ENCODE measurements at regions of chr7 and their contacts with region 1.

Region 1: DNA sequence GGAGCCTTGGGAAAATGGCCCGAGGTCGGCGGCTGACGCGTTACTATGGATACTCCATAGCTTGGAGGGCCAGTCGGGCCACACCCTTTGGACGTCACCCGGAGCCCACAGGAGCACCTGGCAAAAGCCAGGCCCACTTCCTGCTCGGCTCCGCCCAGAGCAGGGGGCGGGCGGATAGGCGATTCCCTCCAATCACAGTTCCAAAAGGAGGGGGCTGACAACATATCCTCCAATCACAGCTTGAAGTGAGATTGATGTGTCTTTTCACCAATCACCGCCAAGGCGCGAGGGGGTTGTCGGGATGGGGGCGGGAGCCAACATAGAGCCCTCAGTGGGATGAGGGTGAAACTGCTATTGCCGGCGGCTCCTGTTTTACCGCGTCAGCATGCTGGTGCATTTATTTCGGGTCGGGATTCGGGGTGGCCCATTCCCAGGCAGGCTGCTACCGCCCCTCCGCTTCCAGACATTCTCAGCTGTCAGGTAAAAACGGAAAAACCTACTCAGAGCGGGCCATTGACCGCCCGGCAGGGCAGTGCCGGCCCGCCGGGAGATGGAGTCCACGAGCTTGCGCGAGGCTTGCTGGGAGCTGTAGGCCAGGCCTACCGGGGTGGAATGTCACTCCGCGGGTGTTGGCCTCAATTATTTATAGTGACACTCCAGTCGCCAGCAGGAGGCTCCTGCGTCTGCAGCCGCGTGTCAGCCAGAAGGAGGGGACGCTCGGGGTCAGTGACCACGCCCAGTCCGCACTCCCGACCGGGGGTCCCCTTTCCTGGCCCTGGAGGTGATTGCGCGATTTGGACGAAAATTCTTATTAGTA is at the start of gene ABCB8:
- DNase-seq: peak; percentile 99 to 100 (median 99)
- H3K4me3 ChIP-seq: peak within 1 kb of the TSS; percentile 84 to 88
- H3K4me3 Mint-ChIP-seq: peak within 1 kb of the TSS; percentile 92 to 97 (median 95)
- H3K27ac ChIP-seq: peak within 1 kb of the TSS; percentile 88
- H3K27ac Mint-ChIP-seq: peak within 1 kb of the TSS; percentile 99 to 100 (median 99)
- H3K4me1 ChIP-seq: peaks cover 21% of the 10 kb centered on the region
- H3K4me1 Mint-ChIP-seq: peaks cover 13 to 28% (median 21%) of the 10 kb centered on the region in 4 donors
- H3K27me3 ChIP-seq: no peaks in the 10 kb centered on the region
- H3K27me3 Mint-ChIP-seq: no peaks in the 10 kb centered on the region
- total RNA-seq, gene ABCB8: 71.2 to 75.8 TPM

Region 2: DNA sequence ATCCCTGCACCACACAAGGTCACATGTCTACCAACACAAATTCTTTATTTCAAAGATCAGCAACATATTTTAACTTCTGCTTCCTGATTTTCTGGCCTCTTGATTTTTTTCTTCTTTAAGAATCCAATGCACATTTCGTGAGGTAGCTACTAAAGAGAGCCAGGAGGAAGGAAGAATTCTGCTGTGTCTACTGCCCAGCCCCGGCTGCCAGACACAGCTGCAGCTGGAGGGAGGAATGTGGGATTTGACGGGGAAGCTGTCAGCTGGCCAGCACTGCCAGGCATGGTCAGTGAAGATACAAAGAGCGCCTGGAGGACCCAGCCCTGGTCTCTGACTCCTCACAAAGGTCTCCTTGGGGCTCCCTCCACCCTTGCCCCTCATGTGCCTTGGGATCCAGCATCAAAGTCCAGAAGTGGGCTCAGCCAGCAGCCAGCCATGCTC is 182.9 kb before region 1 on chr7:
- CTCF ChIA-PET with region 1: no interaction called
- POLR2A ChIA-PET with region 1: no interaction called
- intact Hi-C with region 1: no loop called
- DNase-seq: no peak
- H3K4me3 ChIP-seq: no peak overlapping the region
- H3K4me3 Mint-ChIP-seq: no peak overlapping the region
- H3K27ac ChIP-seq: no peak overlapping the region
- H3K27ac Mint-ChIP-seq: no peak overlapping the region
- H3K4me1 ChIP-seq: no peaks in the 10 kb centered on the region
- H3K4me1 Mint-ChIP-seq: no peaks in the 10 kb centered on the region
- H3K27me3 ChIP-seq: no peaks in the 10 kb centered on the region
- H3K27me3 Mint-ChIP-seq: peaks cover 2 to 7% of the 10 kb centered on the region in 2 donors

Region 3: GRCh38 chr7:150962553-150963399 is 65.6 kb before region 1 on chr7:
- CTCF ChIA-PET with region 1: interaction called, 11 read pairs
- POLR2A ChIA-PET with region 1: no interaction called
- intact Hi-C with region 1: no loop called
- DNase-seq: peak in 4 of 5 donors; percentile 58 to 63 (median 62)
- H3K4me3 ChIP-seq: no peak overlapping the region
- H3K4me3 Mint-ChIP-seq: no peak overlapping the region
- H3K27ac ChIP-seq: no peak overlapping the region
- H3K27ac Mint-ChIP-seq: no peak overlapping the region
- H3K4me1 ChIP-seq: peaks cover 21% of the 10 kb centered on the region
- H3K4me1 Mint-ChIP-seq: peaks cover 6 to 15% (median 9%) of the 10 kb centered on the region in 4 donors
- H3K27me3 ChIP-seq: no peaks in the 10 kb centered on the region
- H3K27me3 Mint-ChIP-seq: peaks cover 12 to 13% of the 10 kb centered on the region in 2 donors

Region 4: GRCh38 chr7:151008511-151009323 is 19.6 kb before region 1 on chr7:
- CTCF ChIA-PET with region 1: interaction called, 11 read pairs
- POLR2A ChIA-PET with region 1: interaction called, 182 read pairs
- intact Hi-C with region 1: loop called (anchors 1 kb)
- DNase-seq: peak; percentile 68 to 82 (median 74)
- H3K4me3 ChIP-seq: peak overlapping the region; percentile 17 to 53
- H3K4me3 Mint-ChIP-seq: peak overlapping the region; percentile 80 to 90 (median 88)
- H3K27ac ChIP-seq: peak overlapping the region; percentile 69
- H3K27ac Mint-ChIP-seq: peak overlapping the region; percentile 87 to 98 (median 96)
- H3K4me1 ChIP-seq: peaks cover 74% of the 10 kb centered on the region
- H3K4me1 Mint-ChIP-seq: peaks cover 39 to 81% (median 59%) of the 10 kb centered on the region in 4 donors
- H3K27me3 ChIP-seq: no peaks in the 10 kb centered on the region
- H3K27me3 Mint-ChIP-seq: no peaks in the 10 kb centered on the region

Region 5: DNA sequence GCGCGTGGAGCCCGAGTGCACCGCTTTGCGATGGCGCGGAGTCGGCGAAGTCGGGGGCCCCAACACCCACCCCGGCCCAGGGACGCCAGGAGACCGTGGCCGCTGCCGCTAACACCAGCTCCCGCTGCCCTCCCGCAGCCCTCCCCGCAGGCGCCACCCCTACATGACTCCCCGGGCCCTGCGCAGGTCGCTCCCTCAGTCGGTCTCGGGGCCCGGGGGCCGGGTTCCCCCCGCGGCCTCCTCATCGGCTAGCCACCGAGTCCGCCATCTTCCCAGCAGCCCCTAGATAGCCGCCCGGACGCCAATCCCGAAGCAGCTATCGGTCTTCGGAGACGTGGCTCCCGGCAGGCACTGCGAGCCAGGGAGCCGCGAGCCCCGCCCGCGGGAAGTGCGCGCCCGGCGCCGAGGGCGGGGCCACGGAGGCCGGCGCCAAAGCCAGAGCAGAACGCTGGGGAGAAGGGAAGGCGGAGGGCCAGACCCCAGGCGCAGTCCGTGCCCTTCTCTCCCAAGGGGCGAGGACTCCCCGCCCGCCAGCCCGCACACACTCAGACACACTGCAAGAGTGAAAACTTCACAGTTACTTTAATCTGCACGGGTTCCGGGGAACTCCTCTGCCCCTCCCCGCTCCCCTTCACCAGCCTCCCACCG is 52.3 kb after region 1 on chr7 and contains the start of gene FASTK:
- CTCF ChIA-PET with region 1: interaction called, 11 read pairs
- POLR2A ChIA-PET with region 1: interaction called, 22 read pairs
- intact Hi-C with region 1: loop called (anchors 1 kb)
- DNase-seq: peak; percentile 86 to 92 (median 89)
- H3K4me3 ChIP-seq: peak within 1 kb of the TSS; percentile 91 to 93
- H3K4me3 Mint-ChIP-seq: peak within 1 kb of the TSS; percentile 85 to 92 (median 89)
- H3K27ac ChIP-seq: peak within 1 kb of the TSS; percentile 90
- H3K27ac Mint-ChIP-seq: peak within 1 kb of the TSS; percentile 72 to 97 (median 91)
- H3K4me1 ChIP-seq: peaks cover 52% of the 10 kb centered on the region
- H3K4me1 Mint-ChIP-seq: peaks cover 23 to 57% (median 36%) of the 10 kb centered on the region in 4 donors
- H3K27me3 ChIP-seq: no peaks in the 10 kb centered on the region
- H3K27me3 Mint-ChIP-seq: no peaks in the 10 kb centered on the region
- total RNA-seq, gene FASTK: 123 to 126 TPM